Activated naive CD4-positive, alpha-beta T cell treated with anti-CD3 and anti-CD28 coated beads, Interleukin-2, amount 10 ng/mL, durations not matched to agents 7 days and 5 days (primary cell): ENCODE measurements at regions of chr17 and their contacts with region 1.

Region 1: GRCh38 chr17:17849845-17850373 is 13.1 kb upstream of the SREBF1 start:
- DNase-seq: peak; percentile 86
- H3K4me3 Mint-ChIP-seq: no peak overlapping the region
- H3K27ac Mint-ChIP-seq: peak overlapping the region; percentile 99
- H3K4me1 Mint-ChIP-seq: peaks cover 83% of the 10 kb centered on the region
- H3K27me3 Mint-ChIP-seq: no peaks in the 10 kb centered on the region

Region 2: DNA sequence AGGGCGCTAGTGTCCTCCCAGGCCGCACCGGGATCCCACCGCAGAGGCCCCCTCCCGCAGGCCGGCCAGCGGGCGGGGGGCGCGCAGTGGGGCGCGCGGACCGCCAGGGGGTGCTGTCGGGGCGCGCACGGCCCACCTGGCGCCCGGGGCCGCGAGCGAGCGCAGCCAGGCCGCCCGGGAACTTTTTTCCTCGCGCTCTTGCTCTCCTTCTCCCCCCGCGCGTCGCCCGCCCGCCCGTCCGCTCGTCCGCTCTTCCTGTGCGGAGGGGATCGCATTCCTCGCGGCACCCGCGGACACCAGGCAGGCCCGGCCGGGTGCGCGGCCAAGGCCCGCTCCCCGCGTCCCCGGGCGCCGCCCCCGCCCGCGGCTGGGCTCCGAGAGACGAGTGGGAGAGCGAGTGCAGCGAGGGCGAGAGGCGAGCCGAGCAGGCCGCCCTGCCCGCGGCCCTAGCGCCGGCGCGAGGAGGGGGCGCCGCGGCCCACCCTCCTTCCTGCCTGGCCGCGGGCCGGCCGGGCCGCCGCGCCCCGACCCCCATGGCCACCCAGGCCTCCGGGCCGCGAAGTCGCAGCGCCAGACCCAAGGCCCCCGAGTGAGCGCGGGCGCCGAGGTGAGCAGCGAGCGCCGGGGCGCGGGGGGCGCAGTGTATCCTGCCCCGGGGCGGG is 168.6 kb before region 1 on chr17 and contains the start of gene RAI1:
- CTCF ChIA-PET with region 1: interaction called, 13 read pairs
- DNase-seq: peak; percentile 76
- H3K4me3 Mint-ChIP-seq: peak within 1 kb of the TSS; percentile 88
- H3K27ac Mint-ChIP-seq: peak within 1 kb of the TSS; percentile 85
- H3K4me1 Mint-ChIP-seq: peaks cover 37% of the 10 kb centered on the region
- H3K27me3 Mint-ChIP-seq: peaks cover 27% of the 10 kb centered on the region

Region 3: GRCh38 chr17:17812211-17813057 is 37.5 kb before region 1 on chr17:
- CTCF ChIA-PET with region 1: interaction called, 95 read pairs
- DNase-seq: peak; percentile 70
- H3K4me3 Mint-ChIP-seq: no peak overlapping the region
- H3K27ac Mint-ChIP-seq: peak overlapping the region; percentile 33
- H3K4me1 Mint-ChIP-seq: peaks cover 23% of the 10 kb centered on the region
- H3K27me3 Mint-ChIP-seq: no peaks in the 10 kb centered on the region

Region 4: GRCh38 chr17:17836250-17836817 is 13.6 kb before region 1 on chr17:
- CTCF ChIA-PET with region 1: interaction called, 12 read pairs
- DNase-seq: peak; percentile 98
- H3K4me3 Mint-ChIP-seq: peak overlapping the region; percentile 86
- H3K27ac Mint-ChIP-seq: peak overlapping the region; percentile 96
- H3K4me1 Mint-ChIP-seq: peaks cover 75% of the 10 kb centered on the region
- H3K27me3 Mint-ChIP-seq: peaks cover 4% of the 10 kb centered on the region

Region 5: DNA sequence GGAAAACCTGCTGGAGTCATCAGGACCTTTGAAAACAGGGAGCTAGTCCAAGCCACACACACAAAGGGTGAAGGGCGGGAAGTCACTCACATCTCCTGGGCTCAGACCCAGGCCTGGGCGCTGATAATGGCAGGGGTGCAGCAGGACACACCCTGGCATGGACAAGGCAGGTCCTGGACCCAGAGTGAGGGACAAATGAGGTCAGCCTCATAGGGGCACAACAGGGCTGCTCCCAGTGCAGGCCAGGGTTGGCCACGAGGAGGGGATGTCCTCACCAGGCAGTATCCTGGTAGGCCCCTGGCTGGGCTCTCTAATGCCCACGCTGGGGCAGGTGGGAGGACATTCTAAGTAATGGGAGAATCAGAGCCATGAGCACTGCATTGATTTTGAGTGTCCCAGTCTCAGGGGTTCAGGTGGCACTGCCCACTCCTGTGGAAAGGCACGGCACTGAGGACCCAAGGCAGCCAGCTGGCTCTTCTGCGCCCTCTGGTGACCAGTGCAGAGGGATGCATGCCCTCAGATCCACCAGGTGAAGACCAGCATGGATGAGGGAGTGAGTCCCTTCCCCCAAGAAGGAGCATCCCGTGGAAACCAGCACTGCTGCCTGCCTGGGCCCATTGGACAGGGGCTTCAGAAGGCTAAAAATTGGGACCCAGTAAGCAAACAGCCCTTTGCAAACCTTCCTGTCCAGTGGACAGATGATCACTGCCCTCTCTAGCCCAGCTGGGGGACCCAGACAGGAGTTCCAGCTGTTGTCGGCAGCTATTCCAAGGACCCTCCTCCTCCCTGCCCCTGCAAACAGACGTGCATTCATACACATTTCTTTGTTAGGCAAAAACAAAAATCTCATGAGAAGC is 10.2 kb after region 1 on chr17:
- CTCF ChIA-PET with region 1: interaction called, 15 read pairs
- DNase-seq: peak; percentile 80
- H3K4me3 Mint-ChIP-seq: no peak overlapping the region
- H3K27ac Mint-ChIP-seq: no peak overlapping the region
- H3K4me1 Mint-ChIP-seq: peaks cover 41% of the 10 kb centered on the region
- H3K27me3 Mint-ChIP-seq: no peaks in the 10 kb centered on the region

Region 6: DNA sequence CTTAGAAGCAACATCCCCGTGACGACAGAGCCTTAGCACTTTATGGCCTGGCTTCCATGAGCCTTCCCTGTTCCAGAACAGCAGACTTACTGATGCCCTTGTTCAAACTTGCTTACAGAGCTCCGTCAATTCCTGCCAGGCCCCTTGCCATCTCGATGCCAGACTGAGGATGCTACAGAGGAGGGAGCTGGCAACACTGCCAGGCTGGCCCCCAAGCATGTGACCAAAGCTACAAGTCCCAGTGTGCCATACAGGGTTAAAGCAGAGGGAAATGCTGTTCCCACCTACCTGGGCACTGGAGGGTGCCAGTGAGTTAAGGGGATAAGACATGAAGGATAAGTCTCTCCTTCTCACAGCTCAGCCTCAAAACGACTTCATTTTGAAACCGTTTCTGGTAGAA is 20.3 kb after region 1 on chr17:
- CTCF ChIA-PET with region 1: no interaction called
- DNase-seq: no peak
- H3K4me3 Mint-ChIP-seq: no peak overlapping the region
- H3K27ac Mint-ChIP-seq: no peak overlapping the region
- H3K4me1 Mint-ChIP-seq: no peaks in the 10 kb centered on the region
- H3K27me3 Mint-ChIP-seq: no peaks in the 10 kb centered on the region